Psoas muscle (tissue), 8 donors: ENCODE measurements at regions of chr10 and their contacts with region 1.

Region 1: GRCh38 chr10:102743588-102744373 is at the start of gene WBP1L:
- DNase-seq: peak; percentile 95 to 97
- ATAC-seq: peak; percentile 96 to 98 (median 96)
- H3K4me3 ChIP-seq: peak within 1 kb of the TSS; percentile 96
- H3K27ac ChIP-seq: peak within 1 kb of the TSS; percentile 96
- H3K4me1 ChIP-seq: peaks cover 14% of the 10 kb centered on the region
- H3K27me3 ChIP-seq: no peaks in the 10 kb centered on the region
- CTCF ChIP-seq: no peak
- total RNA-seq, gene WBP1L: 47.2 to 77.2 (median 54.5) TPM

Region 2: DNA sequence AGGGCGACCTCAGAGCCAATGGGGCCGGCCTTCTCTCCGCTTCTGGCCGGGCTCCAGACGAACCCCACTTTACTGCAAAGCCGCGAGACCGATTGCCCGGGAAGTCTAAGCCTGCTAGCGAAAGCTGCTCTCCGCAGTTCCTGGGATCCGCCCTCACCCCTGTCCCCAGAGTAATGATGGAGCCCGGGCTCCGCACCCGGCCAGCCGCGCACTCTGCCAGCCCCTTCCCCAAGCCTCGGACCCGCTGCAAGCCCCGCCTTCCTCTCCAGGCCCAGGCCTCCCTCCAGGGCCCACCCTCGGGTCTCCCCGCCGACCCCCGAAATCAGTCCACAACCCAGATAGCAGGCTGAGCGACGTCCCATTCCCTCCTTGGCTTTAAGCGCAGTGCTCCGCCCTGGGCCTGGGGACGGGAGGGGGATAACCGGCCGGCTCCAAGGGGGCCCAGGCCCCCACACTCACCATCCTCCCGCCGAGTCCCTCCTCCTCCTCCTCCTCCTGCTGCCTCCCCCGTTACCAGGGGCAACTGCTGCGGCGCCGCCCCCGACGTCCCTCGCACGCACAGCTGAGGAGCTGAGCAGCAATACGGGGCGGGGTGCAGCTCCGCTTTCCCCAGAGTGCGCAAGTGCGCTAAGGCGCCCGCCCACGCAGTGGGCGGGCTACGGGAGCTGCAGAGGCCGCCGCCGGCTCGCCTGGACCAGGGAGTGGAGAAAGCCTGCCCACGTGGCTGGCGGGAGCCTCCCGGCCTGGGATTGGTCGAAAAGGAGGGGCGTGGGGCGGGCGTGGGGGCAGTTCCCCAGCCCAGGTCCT is 29.8 kb before region 1 on chr10 and contains the start of gene ARL3:
- intact Hi-C with region 1: loop called in 1 of 2 experiments (anchors 1 kb)
- DNase-seq: peak; percentile 98 to 99
- ATAC-seq: peak; percentile 97 to 99 (median 98)
- H3K4me3 ChIP-seq: peak within 1 kb of the TSS; percentile 85
- H3K27ac ChIP-seq: peak within 1 kb of the TSS; percentile 69
- H3K4me1 ChIP-seq: peaks cover 33% of the 10 kb centered on the region
- H3K27me3 ChIP-seq: no peaks in the 10 kb centered on the region
- CTCF ChIP-seq: peak; percentile 40
- total RNA-seq, gene ARL3: 2.8 to 5.3 (median 3.3) TPM

Region 3: GRCh38 chr10:102776779-102777456 is 33.1 kb after region 1 on chr10:
- intact Hi-C with region 1: loop called in 1 of 2 experiments (anchors 2 kb)
- DNase-seq: peak; percentile 85 to 92
- ATAC-seq: peak; percentile 71 to 81 (median 74)
- H3K4me3 ChIP-seq: peak overlapping the region; percentile 81
- H3K27ac ChIP-seq: peak overlapping the region; percentile 98
- H3K4me1 ChIP-seq: peaks cover 77% of the 10 kb centered on the region
- H3K27me3 ChIP-seq: no peaks in the 10 kb centered on the region
- CTCF ChIP-seq: no peak

Region 4: DNA sequence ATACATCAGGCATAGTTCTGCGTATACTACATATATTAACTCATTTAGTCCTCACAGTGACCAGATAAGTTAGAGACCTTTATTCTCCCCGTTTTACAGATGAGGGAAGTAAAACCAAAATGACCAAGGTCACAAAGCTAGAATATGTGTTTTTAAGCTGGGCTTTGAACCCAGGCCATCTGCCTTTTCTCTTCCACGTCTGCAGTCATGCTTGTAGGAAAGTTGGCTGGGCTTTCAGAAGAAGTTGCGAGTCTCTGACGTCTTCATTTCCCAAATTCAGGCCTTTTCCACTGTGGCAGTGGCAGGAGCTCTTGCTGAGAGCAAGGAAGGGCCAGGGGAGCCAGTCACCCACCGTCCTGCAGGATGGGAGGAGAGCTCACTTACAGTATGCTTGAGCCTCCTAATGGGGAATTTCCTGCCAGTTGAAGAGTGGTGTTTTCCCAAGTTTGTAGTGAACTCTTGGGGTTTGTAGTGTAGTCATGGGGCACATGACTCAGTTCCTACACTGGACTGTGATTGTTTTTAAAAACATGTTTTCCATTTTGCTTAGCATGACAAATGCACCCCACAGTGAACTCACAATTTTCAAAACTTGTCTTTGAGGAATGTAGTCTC is 59.2 kb after region 1 on chr10:
- intact Hi-C with region 1: loop called in 1 of 2 experiments (anchors 5 kb)
- DNase-seq: peak; percentile 49 to 66
- ATAC-seq: no peak
- H3K4me3 ChIP-seq: no peak overlapping the region
- H3K27ac ChIP-seq: peak overlapping the region; percentile 64
- H3K4me1 ChIP-seq: peaks cover 65% of the 10 kb centered on the region
- H3K27me3 ChIP-seq: no peaks in the 10 kb centered on the region
- CTCF ChIP-seq: no peak

Region 5: GRCh38 chr10:102815790-102816549 is 72.2 kb after region 1 on chr10:
- intact Hi-C with region 1: loop called (anchors 5 kb)
- DNase-seq: no peak
- ATAC-seq: peak; percentile 33 to 44 (median 38)
- H3K4me3 ChIP-seq: no peak overlapping the region
- H3K27ac ChIP-seq: peak overlapping the region; percentile 89
- H3K4me1 ChIP-seq: peaks cover 42% of the 10 kb centered on the region
- H3K27me3 ChIP-seq: no peaks in the 10 kb centered on the region
- CTCF ChIP-seq: no peak